Heart right ventricle (tissue), 16 donors: ENCODE measurements at regions of chr10 and their contacts with region 1.

Region 1: GRCh38 chr10:97334370-97335175 is at the start of gene FRAT2:
- DNase-seq: peak; percentile 91 to 92
- ATAC-seq: peak; percentile 96 to 98 (median 97)
- H3K4me3 ChIP-seq: peak within 1 kb of the TSS; percentile 62 to 95 (median 78)
- H3K27ac ChIP-seq: peak within 1 kb of the TSS; percentile 92 to 100 (median 95)
- H3K4me1 ChIP-seq: peaks cover 3 to 74% (median 59%) of the 10 kb centered on the region in 9 donors
- H3K27me3 ChIP-seq: no peaks in the 10 kb centered on the region
- CTCF ChIP-seq: no peak
- total RNA-seq, gene FRAT2: 3.9 to 11.0 (median 5.8) TPM

Region 2: GRCh38 chr10:97025613-97026242 is 308.8 kb before region 1 on chr10:
- intact Hi-C with region 1: no loop called
- DNase-seq: peak in 1 of 2 donors; percentile 37
- ATAC-seq: peak in 5 of 8 donors; percentile 25 to 48 (median 35)
- H3K4me3 ChIP-seq: no peak overlapping the region
- H3K27ac ChIP-seq: peak overlapping the region in 3 of 10 donors; percentile 15 to 78 (median 21)
- H3K4me1 ChIP-seq: peaks cover 9 to 33% (median 23%) of the 10 kb centered on the region in 9 donors
- H3K27me3 ChIP-seq: no peaks in the 10 kb centered on the region
- CTCF ChIP-seq: peak; percentile 28 to 73 (median 66)

Region 3: DNA sequence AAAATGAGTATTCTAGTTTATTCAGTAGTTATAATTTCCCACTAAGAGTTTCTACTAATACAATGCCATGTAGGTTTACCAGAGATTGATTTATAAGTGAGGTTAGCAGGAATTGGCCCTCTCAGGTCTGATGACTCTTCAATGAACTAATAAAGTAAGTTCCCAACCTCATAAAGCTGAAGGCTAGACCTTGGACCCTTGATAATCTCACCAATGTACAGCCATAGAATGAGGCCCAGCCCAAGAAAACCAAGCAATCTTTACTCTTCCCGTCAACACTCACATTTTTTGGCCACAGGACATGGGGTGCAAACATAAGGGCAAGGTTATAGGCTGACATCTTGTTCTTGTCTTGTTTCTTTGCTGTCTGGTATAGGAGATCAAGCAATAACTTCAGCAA is 75.5 kb before region 1 on chr10:
- intact Hi-C with region 1: no loop called
- DNase-seq: no peak
- ATAC-seq: no peak
- H3K4me3 ChIP-seq: no peak overlapping the region
- H3K27ac ChIP-seq: no peak overlapping the region
- H3K4me1 ChIP-seq: peaks cover 0 to 6% (median 0%) of the 10 kb centered on the region in 9 donors
- H3K27me3 ChIP-seq: no peaks in the 10 kb centered on the region
- CTCF ChIP-seq: no peak

Region 4: GRCh38 chr10:97278491-97278989 is 56.0 kb before region 1 on chr10:
- intact Hi-C with region 1: loop called in 6 of 10 experiments (anchors 2 to 10 kb)
- DNase-seq: no peak
- ATAC-seq: peak; percentile 85 to 98 (median 92)
- H3K4me3 ChIP-seq: peak overlapping the region in 1 of 10 donors; percentile 2
- H3K27ac ChIP-seq: peak overlapping the region in 6 of 10 donors; percentile 31 to 72 (median 48)
- H3K4me1 ChIP-seq: peaks cover 0 to 25% (median 20%) of the 10 kb centered on the region in 9 donors
- H3K27me3 ChIP-seq: no peaks in the 10 kb centered on the region
- CTCF ChIP-seq: peak; percentile 56 to 84 (median 71)

Region 5: GRCh38 chr10:97292097-97292862 is 42.3 kb before region 1 on chr10 and contains the start of gene ARHGAP19:
- intact Hi-C with region 1: loop called in 6 of 10 experiments (anchors 1 to 5 kb)
- DNase-seq: peak; percentile 89 to 98
- ATAC-seq: peak; percentile 99 to 100 (median 100)
- H3K4me3 ChIP-seq: peak within 1 kb of the TSS; percentile 57 to 97 (median 90)
- H3K27ac ChIP-seq: peak within 1 kb of the TSS; percentile 73 to 97 (median 94)
- H3K4me1 ChIP-seq: peaks cover 0 to 14% (median 9%) of the 10 kb centered on the region in 9 donors
- H3K27me3 ChIP-seq: no peaks in the 10 kb centered on the region
- CTCF ChIP-seq: peak in 3 of 9 donors; percentile 18 to 33 (median 22)
- total RNA-seq, gene ARHGAP19: 2.3 to 6.2 (median 3.6) TPM

Region 6: DNA sequence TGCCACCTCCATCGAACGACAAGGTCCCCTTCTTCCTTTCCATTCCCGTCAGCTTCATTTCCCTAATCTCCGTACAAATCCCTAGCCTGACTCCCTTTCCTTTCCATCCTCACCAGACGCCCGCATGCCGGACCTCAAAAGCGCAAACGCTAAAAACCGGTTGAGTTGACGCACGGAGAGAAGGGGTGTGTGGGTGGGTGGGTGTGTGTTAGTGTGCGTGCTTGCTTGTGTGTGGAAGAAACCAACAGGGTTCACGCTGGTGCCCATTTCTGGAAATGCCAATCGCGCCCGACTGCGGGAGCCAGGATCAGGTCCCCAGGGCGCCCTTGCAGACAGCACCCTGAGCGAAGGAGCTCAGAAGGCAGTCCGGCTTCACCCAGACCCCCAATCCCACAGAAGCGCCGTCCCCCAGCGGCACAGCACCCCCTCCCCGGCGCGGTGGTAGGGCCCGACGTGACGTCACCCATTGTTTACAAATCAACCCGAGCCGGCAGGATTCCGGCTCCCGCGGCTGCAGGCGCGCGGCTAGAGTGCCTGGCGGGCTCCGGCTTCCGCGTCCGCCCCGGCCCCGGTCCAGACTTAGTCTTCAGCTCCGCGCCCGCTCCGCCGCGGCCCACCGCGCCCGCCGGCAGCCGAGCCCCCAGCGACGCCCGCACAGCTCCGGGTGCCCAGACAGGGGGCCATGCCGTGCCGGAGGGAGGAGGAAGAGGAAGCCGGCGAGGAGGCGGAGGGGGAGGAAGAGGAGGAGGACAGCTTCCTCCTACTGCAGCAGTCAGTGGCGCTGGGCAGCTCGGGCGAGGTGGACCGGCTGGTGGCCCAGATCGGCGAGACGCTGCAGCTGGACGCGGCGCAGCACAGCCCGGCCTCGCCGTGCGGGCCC is 15.6 kb before region 1 on chr10 and contains the start of gene FRAT1:
- intact Hi-C with region 1: loop called in 3 of 10 experiments (anchors 1 to 2 kb)
- DNase-seq: peak; percentile 92 to 93
- ATAC-seq: peak; percentile 88 to 96 (median 92)
- H3K4me3 ChIP-seq: peak within 1 kb of the TSS; percentile 51 to 97 (median 84)
- H3K27ac ChIP-seq: peak within 1 kb of the TSS; percentile 96 to 100 (median 98)
- H3K4me1 ChIP-seq: peaks cover 6 to 53% (median 24%) of the 10 kb centered on the region in 9 donors
- H3K27me3 ChIP-seq: no peaks in the 10 kb centered on the region
- CTCF ChIP-seq: no peak
- total RNA-seq, gene FRAT1: 2.3 to 6.6 (median 3.1) TPM

Region 7: GRCh38 chr10:97400665-97401454 is 66.3 kb after region 1 on chr10 and contains the start of gene RRP12:
- intact Hi-C with region 1: loop called in 1 of 10 experiments (anchors 5 kb)
- DNase-seq: peak; percentile 37 to 96
- ATAC-seq: peak; percentile 95 to 98 (median 97)
- H3K4me3 ChIP-seq: peak within 1 kb of the TSS; percentile 48 to 96 (median 80)
- H3K27ac ChIP-seq: peak within 1 kb of the TSS in 9 of 10 donors; percentile 56 to 91 (median 83)
- H3K4me1 ChIP-seq: peaks cover 0 to 30% (median 13%) of the 10 kb centered on the region in 9 donors
- H3K27me3 ChIP-seq: no peaks in the 10 kb centered on the region
- CTCF ChIP-seq: peak in 4 of 9 donors; percentile 8 to 36 (median 22)
- total RNA-seq, gene RRP12: 11.1 to 30.5 (median 20.8) TPM